Dorsolateral prefrontal cortex (tissue), 120 donors: ENCODE measurements at regions of chrX and their contacts with region 1.

Region 1: DNA sequence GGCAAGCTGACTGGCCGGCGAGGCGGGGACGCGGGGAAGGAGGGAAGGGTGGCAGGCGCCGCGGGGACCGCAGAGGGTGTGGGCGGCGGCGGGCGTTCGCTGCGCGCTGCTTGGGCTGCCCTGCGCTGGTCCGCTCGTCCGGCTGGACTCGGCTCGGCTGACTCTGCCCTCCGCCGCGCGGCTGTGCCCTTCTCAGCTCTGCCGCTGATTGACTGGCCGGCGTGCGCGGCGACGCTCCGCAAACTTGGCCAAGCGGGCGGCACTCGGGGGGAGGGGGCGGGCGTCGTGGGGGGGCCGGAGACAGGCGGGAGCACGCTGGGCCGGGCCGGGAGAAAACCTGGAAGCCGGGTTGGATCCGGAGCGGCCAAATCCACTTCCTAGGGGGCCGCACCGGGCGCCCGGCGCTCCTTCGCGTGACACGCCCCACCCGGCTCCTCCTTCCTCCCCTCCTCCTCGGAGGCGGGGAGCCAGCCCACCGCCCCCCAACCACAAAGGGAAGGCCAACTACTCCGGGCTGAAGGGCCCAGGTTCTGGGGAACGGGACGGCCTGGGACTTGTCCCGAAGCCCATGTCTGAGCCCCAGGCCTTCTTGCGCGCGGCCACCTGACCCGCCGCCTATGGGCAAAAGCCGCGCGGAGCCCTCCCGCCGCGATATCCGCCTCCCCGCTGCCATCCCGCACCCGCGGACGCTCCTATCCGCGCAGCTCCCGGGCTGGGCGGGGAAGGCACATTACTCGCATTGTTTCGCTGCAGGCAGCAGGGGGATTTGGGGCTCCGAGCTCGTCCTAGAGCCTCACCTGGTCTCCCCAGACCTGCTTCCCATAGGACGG is at the start of gene GPC4:
- DNase-seq: peak in 4 of 10 donors; percentile 11 to 53 (median 38)
- H3K4me3 ChIP-seq: peak within 1 kb of the TSS; percentile 29 to 72 (median 56)
- H3K27ac ChIP-seq: peak within 1 kb of the TSS in 7 of 59 donors; percentile 6 to 50 (median 26)
- H3K27me3 ChIP-seq: peaks cover 0 to 89% (median 25%) of the 10 kb centered on the region in 45 donors
- CTCF ChIP-seq: no peak
- total RNA-seq, gene GPC4: 3.4 to 20.2 (median 7.9) TPM

Region 2: DNA sequence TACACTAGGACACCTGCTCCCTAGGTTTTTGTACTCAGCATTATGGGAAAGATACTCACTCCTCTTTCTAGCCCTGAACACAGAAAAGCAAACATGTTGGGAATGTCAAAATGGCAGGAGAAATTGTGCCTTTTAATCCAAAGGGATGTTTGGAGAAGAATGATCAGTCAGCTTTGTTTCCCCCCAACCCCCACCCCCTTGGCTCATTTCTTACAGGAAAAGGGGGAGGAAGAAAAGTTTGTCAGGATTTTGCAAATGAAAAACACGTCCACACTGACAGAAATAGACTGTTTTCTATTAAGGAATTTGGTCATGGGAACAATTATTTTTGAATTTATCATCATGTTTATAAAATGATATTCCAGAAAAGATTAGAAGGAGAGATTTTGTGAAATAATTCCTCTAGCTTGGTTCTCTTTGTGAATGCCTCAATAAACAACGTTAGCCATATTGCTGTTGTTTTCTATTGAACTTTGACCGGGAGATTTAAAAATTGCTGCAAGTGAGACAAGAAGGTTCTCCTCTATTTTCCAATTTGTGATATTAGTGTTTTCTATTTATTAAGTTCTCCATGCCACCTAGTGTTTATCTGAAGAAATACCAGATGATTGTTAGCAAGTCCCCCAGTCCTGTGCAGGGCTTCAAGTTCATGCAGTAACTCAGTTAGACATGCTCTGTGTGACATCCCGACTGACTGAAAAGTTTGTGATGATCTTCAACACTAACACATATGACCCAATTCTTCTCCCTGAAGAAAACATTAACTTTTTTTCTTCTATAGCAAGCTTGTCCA is 166.0 kb before region 1 on chrX:
- intact Hi-C with region 1: no loop called
- DNase-seq: no peak
- H3K4me3 ChIP-seq: no peak overlapping the region
- H3K27ac ChIP-seq: no peak overlapping the region
- H3K27me3 ChIP-seq: peaks cover 0 to 64% (median 12%) of the 10 kb centered on the region in 45 donors
- CTCF ChIP-seq: peak in 16 of 56 donors; percentile 7 to 35 (median 18)

Region 3: DNA sequence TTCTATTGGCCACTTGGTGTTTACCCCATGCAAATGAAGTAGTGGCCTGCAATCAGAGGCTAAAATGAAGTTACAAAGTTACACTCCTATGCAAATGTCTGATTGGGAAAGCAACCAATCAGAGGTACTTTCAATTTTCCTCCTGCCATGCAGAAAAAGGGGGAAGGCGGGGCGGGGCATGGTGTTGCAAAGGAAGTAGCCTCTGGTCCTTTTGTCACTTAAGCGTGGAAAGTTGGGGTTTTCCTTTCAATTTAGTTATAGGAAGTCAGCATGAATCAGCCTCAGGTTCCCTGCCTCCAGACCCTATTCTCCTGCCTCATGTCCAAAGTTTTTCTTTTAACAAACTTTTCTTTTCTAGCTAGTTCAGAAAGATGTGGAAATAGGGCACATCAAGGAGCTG is 69.5 kb before region 1 on chrX:
- intact Hi-C with region 1: loop called in 1 of 2 experiments (anchors 10 kb)
- DNase-seq: no peak
- H3K4me3 ChIP-seq: no peak overlapping the region
- H3K27ac ChIP-seq: no peak overlapping the region
- H3K27me3 ChIP-seq: peaks cover 0 to 82% (median 39%) of the 10 kb centered on the region in 45 donors
- CTCF ChIP-seq: no peak

Region 4: GRCh38 chrX:133645977-133646718 is 230.7 kb after region 1 on chrX:
- intact Hi-C with region 1: no loop called
- DNase-seq: no peak
- H3K4me3 ChIP-seq: no peak overlapping the region
- H3K27ac ChIP-seq: no peak overlapping the region
- H3K27me3 ChIP-seq: peaks cover 0 to 62% (median 14%) of the 10 kb centered on the region in 45 donors
- CTCF ChIP-seq: no peak